OCI-LY7 (cell line): ENCODE measurements at regions of chr5 and their contacts with region 1.

Region 1: DNA sequence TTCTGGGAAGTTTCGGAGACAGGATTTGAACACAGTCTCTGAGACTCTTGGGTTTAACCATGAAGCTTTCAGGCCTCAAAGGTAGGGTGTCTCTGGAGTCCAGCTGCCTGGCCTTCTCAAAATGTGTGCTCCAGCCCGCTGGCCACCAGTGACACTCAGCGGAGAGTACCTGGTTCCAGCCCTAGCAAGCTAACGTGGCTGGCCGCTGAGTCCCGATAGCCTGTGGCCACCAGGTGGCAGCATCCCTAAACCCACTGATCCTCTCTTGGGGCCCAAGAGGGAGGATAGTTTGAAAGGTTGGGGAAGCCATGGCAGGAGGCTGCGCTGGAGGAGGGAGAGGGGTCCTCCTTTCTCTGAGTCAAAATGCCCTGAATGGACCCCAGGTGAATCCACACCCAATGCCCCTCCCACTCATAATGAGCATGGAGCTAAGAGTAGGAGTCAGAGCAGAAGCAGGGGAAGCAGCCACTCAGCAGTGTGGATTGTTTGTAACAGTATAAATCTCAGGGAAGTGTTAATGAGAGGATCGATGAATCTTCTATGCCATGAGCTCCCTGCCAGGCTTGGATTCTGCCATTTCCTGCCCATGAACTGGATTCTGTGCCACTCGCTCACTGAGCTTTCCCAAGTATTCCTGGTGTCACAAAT is 5.4 kb upstream of the TIFAB start:
- DNase-seq: peak; percentile 58
- H3K4me3 ChIP-seq: no peak overlapping the region
- H3K27ac ChIP-seq: no peak overlapping the region
- H3K4me1 ChIP-seq: no peaks in the 10 kb centered on the region
- CTCF ChIP-seq: peak; percentile 90

Region 2: GRCh38 chr5:135441350-135441831 is 16.2 kb before region 1 on chr5:
- CTCF ChIA-PET with region 1: no interaction called
- POLR2A ChIA-PET with region 1: no interaction called
- intact Hi-C with region 1: no loop called
- DNase-seq: no peak
- H3K4me3 ChIP-seq: no peak overlapping the region
- H3K27ac ChIP-seq: no peak overlapping the region
- H3K4me1 ChIP-seq: peaks cover 12% of the 10 kb centered on the region
- CTCF ChIP-seq: no peak

Region 3: GRCh38 chr5:135526924-135527323 is 69.4 kb after region 1 on chr5:
- CTCF ChIA-PET with region 1: no interaction called
- POLR2A ChIA-PET with region 1: no interaction called
- intact Hi-C with region 1: no loop called
- DNase-seq: no peak
- H3K4me3 ChIP-seq: no peak overlapping the region
- H3K27ac ChIP-seq: no peak overlapping the region
- H3K4me1 ChIP-seq: no peaks in the 10 kb centered on the region
- CTCF ChIP-seq: no peak

Region 4: DNA sequence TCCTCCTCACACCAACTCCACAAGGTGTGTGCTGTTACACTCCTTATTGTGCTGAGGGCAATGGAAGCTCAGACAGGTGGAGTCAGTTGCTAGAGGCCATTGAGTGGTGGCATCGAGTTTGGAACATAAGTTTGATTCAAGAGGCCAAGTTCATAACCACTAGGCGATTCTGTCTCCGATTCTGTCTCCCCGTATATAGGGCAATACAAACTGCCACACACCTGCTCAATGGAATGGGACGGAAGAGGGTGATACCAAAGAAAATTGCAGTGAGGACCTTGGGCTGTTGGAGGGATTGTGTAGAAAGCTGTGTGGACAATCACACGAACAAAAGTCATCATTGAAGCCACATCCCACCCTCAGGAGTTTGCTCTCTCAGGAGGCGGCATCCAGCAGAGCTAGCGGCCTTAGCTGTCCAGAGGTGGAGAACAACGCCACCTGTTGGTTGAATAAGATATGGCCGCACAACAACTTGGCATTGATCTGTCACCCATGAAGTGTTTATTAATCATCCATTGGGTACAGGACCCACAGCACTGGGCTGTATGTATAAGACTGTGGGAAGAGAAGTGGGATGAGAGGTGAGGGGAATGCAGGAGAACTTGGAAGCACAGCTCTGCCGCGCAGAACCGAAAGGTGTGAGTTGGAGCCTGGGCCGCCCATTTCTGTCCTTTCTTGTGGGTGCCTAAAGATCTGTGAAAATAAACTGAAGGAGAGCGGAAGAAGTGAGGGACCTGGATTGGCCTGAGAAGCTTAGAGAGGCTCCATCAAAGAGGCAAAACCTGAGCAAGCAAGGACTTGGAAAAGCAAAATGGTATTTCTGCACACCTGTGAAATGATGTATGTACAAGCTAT is 94.3 kb after region 1 on chr5:
- CTCF ChIA-PET with region 1: interaction called, 4 read pairs
- POLR2A ChIA-PET with region 1: no interaction called
- intact Hi-C with region 1: loop called (anchors 1 kb)
- DNase-seq: peak; percentile 58
- H3K4me3 ChIP-seq: no peak overlapping the region
- H3K27ac ChIP-seq: no peak overlapping the region
- H3K4me1 ChIP-seq: no peaks in the 10 kb centered on the region
- CTCF ChIP-seq: peak; percentile 91

Region 5: GRCh38 chr5:135821061-135821801 is 363.7 kb after region 1 on chr5:
- CTCF ChIA-PET with region 1: no interaction called
- POLR2A ChIA-PET with region 1: no interaction called
- intact Hi-C with region 1: no loop called
- DNase-seq: peak; percentile 22
- H3K4me3 ChIP-seq: no peak overlapping the region
- H3K27ac ChIP-seq: no peak overlapping the region
- H3K4me1 ChIP-seq: no peaks in the 10 kb centered on the region
- CTCF ChIP-seq: no peak